ENCODE measurements at regions of chr18 and their contacts with region 1.

Region 1: DNA sequence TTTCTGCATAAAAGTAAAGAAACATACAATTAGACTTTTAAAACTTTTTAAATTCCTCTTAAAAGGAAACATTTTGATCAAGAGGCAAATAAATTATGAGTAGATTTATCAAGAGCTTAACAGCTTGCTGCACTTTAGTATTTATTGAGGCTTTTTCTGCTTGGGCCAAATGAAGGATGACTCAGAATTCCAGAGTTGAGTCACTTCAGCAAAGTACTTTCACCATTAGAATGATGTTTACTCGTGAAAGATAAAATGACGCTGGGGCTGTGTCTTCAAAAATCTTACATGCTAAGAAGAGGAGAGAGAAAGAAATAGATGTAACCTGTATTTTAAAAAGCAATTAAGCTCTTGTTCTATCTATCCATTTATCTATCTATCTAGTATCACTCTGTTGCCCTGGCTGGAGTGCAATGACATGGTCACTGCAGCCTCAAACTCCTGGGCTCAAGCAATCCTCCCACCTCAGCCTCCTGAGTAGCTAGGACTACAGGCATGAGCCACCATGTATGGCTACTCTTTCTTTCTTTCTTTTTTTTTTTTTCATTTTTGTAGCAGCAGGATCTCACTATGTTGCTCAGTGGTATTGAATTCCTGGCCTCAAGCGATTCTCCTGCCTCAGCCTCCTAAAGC is 75.3 kb upstream of the RIOK3 start:
- DNase-seq: peak in 1 of 4 experiments; percentile 25
- ATAC-seq: no peak
- H3K4me3 ChIP-seq: no peak overlapping the region
- H3K27ac ChIP-seq: no peak overlapping the region
- H3K4me1 ChIP-seq: peaks cover 6 to 17% of the 10 kb centered on the region in 2 experiments; a peak in 3 of 5 replicates
- H3K27me3 ChIP-seq: no peaks in the 10 kb centered on the region; a peak in 1 of 5 replicates
- CTCF ChIP-seq: no peak
- EP300 ChIP-seq: no peak
- POLR2A ChIP-seq: no peak
- RAD21 ChIP-seq: no peak

Region 2: GRCh38 chr18:23237524-23238151 is 140.1 kb before region 1 on chr18:
- CTCF ChIA-PET with region 1: no interaction called
- POLR2A ChIA-PET with region 1: no interaction called
- in situ Hi-C with region 1: no loop called
- intact Hi-C with region 1: loop called (anchors 2 kb)
- DNase-seq: peak in 2 of 4 experiments; percentile 33
- ATAC-seq: peak; percentile 80
- H3K4me3 ChIP-seq: no peak overlapping the region
- H3K27ac ChIP-seq: no peak overlapping the region
- H3K4me1 ChIP-seq: peaks cover 0 to 5% of the 10 kb centered on the region in 2 experiments; a peak in 2 of 5 replicates
- H3K27me3 ChIP-seq: peaks cover 65 to 80% of the 10 kb centered on the region in 2 experiments
- CTCF ChIP-seq: peak; percentile 17 to 40 (median 19); a peak in 3 of 6 replicates
- EP300 ChIP-seq: no peak
- POLR2A ChIP-seq: no peak
- RAD21 ChIP-seq: no peak

Measured in K562 (cell line).